ENCODE measurements at regions of chr3 and their contacts with region 1.

Region 1: DNA sequence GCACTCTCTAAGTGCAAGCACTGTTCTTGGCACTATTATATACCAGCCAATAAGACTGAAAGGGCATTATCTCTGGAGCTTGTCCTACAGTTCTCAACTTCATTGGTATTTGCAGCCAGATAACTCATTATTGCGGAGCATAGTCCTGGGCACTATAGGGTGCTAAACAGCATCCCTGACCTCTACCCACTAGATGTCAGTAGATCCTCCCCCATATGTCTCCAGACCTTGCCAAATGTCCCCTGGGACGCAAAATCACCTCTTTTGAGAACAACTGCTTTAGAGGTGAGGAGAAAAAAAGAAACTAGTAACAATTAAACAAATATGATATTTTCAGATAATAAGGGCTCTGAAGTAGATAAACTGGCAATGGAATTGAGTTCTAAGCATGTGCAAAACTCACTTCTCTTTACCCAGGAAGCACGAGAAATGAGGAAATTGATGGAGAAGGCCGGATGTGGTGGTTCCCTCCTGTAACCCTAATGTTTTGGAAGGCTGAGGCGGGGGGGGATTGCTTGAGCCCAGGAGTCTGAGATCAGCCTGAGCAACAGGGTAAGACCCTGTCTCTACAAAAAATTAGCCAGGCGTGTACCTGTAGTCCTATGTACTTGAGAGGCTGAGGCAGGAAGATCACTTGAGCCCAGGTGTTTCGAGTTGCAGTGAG is 61.4 kb downstream of the FRMD4B start:
- DNase-seq: no peak
- CTCF ChIP-seq: peak; percentile 40

Region 2: DNA sequence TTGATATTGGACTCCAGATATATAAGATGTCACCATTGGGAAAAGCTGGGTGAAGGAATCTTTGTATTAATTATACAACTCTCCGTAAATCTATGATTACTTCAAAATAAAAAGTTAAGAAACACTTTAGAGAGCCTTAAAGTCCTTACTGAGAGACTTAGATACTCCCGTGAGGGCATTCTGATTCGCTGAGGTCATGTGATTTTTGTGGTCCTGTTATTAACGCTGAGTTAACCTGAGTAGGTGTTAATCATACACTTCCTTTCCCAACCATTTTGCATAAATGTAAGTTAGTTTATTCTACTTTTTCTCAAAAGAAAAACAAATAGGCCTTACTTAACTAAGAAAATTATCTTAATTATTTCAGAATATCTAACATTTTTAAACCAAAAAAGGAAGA is 135.0 kb before region 1 on chr3:
- in situ Hi-C with region 1: no loop called
- DNase-seq: no peak
- CTCF ChIP-seq: no peak

Region 3: GRCh38 chr3:69425261-69425660 is 100.8 kb after region 1 on chr3:
- in situ Hi-C with region 1: loop called (anchors 10 kb)
- DNase-seq: peak; percentile 42
- CTCF ChIP-seq: peak; percentile 62

Region 4: GRCh38 chr3:70539908-70540307 is 1215.4 kb after region 1 on chr3:
- in situ Hi-C with region 1: no loop called
- DNase-seq: no peak
- CTCF ChIP-seq: peak; percentile 15

Measured in GM13976 (cell line).